ENCODE measurements at regions of chr2 and their contacts with region 1.

Region 1: GRCh38 chr2:224449212-224450147 is 47.6 kb upstream of the FAM124B start:
- DNase-seq: peak; percentile 21 to 44 (median 39)
- H3K4me3 ChIP-seq: no peak overlapping the region
- H3K4me3 Mint-ChIP-seq: no peak overlapping the region
- H3K27ac ChIP-seq: no peak overlapping the region
- H3K27ac Mint-ChIP-seq: no peak overlapping the region
- H3K4me1 ChIP-seq: no peaks in the 10 kb centered on the region
- H3K4me1 Mint-ChIP-seq: no peaks in the 10 kb centered on the region
- H3K27me3 ChIP-seq: no peaks in the 10 kb centered on the region
- H3K27me3 Mint-ChIP-seq: peaks cover 0 to 11% (median 0%) of the 10 kb centered on the region in 3 donors
- CTCF ChIP-seq: peak; percentile 73

Region 2: GRCh38 chr2:224319455-224320149 is 129.9 kb before region 1 on chr2:
- intact Hi-C with region 1: no loop called
- DNase-seq: no peak
- H3K4me3 ChIP-seq: peak overlapping the region in 1 of 3 experiments; percentile 53
- H3K4me3 Mint-ChIP-seq: peak overlapping the region; percentile 35 to 54
- H3K27ac ChIP-seq: peak overlapping the region; percentile 16 to 70
- H3K27ac Mint-ChIP-seq: peak overlapping the region in 5 of 7 donors; percentile 26 to 74 (median 36)
- H3K4me1 ChIP-seq: peaks cover 25 to 34% of the 10 kb centered on the region in 2 donors
- H3K4me1 Mint-ChIP-seq: peaks cover 32% of the 10 kb centered on the region
- H3K27me3 ChIP-seq: peaks cover 5 to 6% of the 10 kb centered on the region in 2 donors
- H3K27me3 Mint-ChIP-seq: peaks cover 2 to 5% (median 4%) of the 10 kb centered on the region in 3 donors
- CTCF ChIP-seq: no peak

Region 3: DNA sequence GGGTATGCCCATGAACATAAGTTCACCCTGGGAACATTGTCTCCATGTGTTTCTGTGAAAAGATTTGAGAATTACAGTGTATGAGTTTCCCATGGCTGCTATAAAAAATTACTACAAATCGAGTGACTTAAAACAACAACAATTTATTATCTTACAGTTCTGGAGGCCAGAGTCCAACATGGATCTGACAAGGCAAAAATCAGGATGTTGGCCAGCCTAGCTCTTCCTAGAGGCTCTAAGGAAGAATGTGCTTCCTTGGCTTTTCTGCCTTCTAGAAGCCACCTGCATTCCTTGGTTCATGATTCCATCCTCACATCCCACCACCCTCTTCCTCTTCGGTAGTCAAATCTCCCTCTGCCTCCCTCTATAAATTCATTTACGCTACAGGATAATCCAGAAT is 86.2 kb before region 1 on chr2:
- intact Hi-C with region 1: loop called (anchors 2 to 5 kb)
- DNase-seq: no peak
- H3K4me3 ChIP-seq: no peak overlapping the region
- H3K4me3 Mint-ChIP-seq: no peak overlapping the region
- H3K27ac ChIP-seq: no peak overlapping the region
- H3K27ac Mint-ChIP-seq: no peak overlapping the region
- H3K4me1 ChIP-seq: no peaks in the 10 kb centered on the region
- H3K4me1 Mint-ChIP-seq: peaks cover 5% of the 10 kb centered on the region
- H3K27me3 ChIP-seq: no peaks in the 10 kb centered on the region
- H3K27me3 Mint-ChIP-seq: peaks cover 0 to 1% (median 0%) of the 10 kb centered on the region in 3 donors
- CTCF ChIP-seq: no peak